GM13976 (cell line): ENCODE measurements at regions of chr11 and their contacts with region 1.

Region 1: GRCh38 chr11:1882519-1883238 is 9.0 kb downstream of the PRR33 start:
- DNase-seq: peak; percentile 93
- CTCF ChIP-seq: peak; percentile 95

Region 2: DNA sequence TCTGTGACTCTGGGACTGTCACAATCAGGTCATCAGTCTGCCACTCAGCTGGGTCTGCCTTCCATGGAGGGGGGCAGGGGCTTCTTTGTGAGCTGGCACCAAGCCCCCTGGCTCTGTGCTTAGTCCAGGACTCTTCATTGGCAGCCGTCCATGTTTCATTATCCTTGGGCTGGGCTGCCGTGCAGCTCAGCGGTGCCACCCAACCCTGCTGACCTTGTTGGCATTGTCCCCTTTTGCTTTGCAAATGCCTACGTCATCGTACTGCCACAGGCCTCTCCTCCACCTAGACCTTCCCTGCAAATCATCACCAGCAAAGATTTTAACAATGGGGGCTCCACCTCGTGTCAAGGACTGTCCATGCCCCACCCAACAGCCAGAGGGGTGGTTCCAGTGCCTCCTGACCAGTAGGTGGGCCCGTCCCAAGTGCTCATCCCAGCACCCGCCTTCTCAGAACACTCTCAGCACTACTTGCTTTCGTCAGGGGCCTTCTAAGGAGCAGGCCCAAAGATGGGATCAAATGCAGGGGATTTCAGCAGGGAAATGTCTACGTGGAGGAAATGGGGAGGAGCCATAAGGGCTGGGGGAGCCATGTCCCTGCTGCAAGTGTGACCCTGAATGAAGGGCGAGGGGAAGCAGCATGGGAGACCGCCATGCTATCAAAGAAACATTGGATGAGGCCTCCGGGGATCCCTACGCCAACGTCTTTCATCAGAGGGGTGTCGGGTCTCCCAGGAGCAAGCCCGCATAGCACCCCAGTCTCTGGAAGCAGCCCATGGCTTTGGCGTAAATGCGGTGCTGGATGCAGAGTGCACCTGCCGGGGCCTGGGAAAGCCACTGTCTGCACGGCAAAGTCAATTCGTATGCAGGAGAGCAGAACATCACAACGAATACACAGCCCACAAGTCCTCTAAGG is 167.4 kb before region 1 on chr11:
- in situ Hi-C with region 1: no loop called
- DNase-seq: no peak
- CTCF ChIP-seq: no peak

Region 3: DNA sequence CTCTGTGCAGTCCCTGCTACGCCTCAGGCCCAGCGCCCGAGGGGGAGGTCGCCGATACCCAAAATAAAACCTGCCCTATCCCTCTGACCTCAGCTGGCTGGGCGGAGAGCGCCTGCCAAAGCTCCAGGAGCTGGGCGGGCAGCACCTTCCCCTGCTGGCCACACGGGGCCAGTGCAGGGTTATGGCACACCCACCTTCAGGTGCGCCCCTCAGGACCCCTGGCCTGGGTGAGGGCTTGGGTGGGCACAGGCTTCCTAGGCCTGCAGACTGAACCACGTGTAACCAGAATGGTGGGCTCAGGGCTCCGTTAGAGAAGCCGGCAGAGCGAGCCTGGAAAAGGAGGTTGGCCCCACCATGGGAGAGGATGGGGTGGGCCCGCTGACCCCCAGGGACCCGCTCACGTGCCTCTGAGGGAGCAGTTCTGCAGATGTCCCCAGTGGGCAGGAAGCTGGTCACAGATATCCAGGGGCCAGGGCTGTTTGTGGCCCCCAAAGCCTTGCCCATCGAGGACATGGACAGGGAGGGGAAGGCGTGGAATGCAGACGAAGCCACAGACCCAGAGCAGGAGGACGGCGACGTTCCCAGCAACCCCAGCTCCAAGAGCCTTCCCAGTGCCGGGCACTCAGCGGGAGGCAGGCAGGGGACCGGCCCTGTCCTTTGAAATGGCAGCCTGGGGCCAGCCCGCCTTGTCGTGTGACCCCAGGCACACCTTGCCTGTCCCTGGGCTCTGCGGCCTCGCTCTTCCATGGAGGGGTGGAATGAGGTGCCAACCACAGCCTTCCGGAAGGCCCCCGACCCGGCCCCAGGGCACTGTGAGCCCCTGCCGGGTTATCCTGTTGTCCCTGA is 35.2 kb after region 1 on chr11:
- in situ Hi-C with region 1: loop called (anchors 5 kb)
- DNase-seq: peak; percentile 68
- CTCF ChIP-seq: peak; percentile 43